CD4-positive, alpha-beta memory T cell (primary cell): ENCODE measurements at regions of chr9 and their contacts with region 1.

Region 1: DNA sequence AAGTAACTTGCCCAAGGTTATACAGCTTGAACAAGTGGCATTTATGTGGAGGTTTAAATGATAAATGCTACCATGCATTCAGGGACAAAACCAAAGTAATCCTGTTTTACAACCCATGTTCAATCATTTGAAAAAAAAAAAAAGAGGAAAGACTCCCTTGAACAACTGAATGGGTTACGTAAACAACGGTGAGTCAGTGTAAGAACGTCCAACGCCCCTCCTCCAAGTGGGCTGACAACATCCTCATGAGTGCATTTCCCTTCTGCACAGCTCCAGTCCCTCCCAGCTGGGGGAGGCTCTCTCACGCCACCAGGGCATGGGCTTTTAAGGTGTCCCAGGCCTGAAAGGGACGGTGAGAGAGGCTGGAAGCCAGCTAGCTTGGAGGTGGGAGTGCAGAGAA is 90.0 kb downstream of the PRRT1B start:
- DNase-seq: peak; percentile 74 to 94 (median 80)
- H3K4me3 ChIP-seq: no peak overlapping the region
- H3K4me3 Mint-ChIP-seq: peak overlapping the region in 5 of 8 donors; percentile 13 to 60 (median 26)
- H3K27ac ChIP-seq: peak overlapping the region; percentile 67
- H3K27ac Mint-ChIP-seq: peak overlapping the region; percentile 92 to 97 (median 96)
- H3K4me1 ChIP-seq: peaks cover 20% of the 10 kb centered on the region
- H3K4me1 Mint-ChIP-seq: peaks cover 23 to 50% (median 38%) of the 10 kb centered on the region in 4 donors
- H3K27me3 ChIP-seq: no peaks in the 10 kb centered on the region
- H3K27me3 Mint-ChIP-seq: no peaks in the 10 kb centered on the region

Region 2: GRCh38 chr9:131366761-131367401 is 268.4 kb before region 1 on chr9:
- CTCF ChIA-PET with region 1: no interaction called
- POLR2A ChIA-PET with region 1: no interaction called
- intact Hi-C with region 1: no loop called
- DNase-seq: no peak
- H3K4me3 ChIP-seq: no peak overlapping the region
- H3K4me3 Mint-ChIP-seq: no peak overlapping the region
- H3K27ac ChIP-seq: no peak overlapping the region
- H3K27ac Mint-ChIP-seq: no peak overlapping the region
- H3K4me1 ChIP-seq: peaks cover 1% of the 10 kb centered on the region
- H3K4me1 Mint-ChIP-seq: peaks cover 2 to 5% (median 3%) of the 10 kb centered on the region in 4 donors
- H3K27me3 ChIP-seq: no peaks in the 10 kb centered on the region
- H3K27me3 Mint-ChIP-seq: no peaks in the 10 kb centered on the region

Region 3: GRCh38 chr9:131590908-131591844 is 44.1 kb before region 1 on chr9:
- CTCF ChIA-PET with region 1: interaction called, 5 read pairs
- POLR2A ChIA-PET with region 1: no interaction called
- intact Hi-C with region 1: loop called (anchors 2 kb)
- DNase-seq: peak; percentile 68 to 74 (median 73)
- H3K4me3 ChIP-seq: no peak overlapping the region
- H3K4me3 Mint-ChIP-seq: peak overlapping the region in 6 of 8 donors; percentile 20 to 73 (median 46)
- H3K27ac ChIP-seq: no peak overlapping the region
- H3K27ac Mint-ChIP-seq: peak overlapping the region; percentile 77 to 94 (median 85)
- H3K4me1 ChIP-seq: peaks cover 25% of the 10 kb centered on the region
- H3K4me1 Mint-ChIP-seq: peaks cover 22 to 48% (median 34%) of the 10 kb centered on the region in 4 donors
- H3K27me3 ChIP-seq: no peaks in the 10 kb centered on the region
- H3K27me3 Mint-ChIP-seq: no peaks in the 10 kb centered on the region

Region 4: GRCh38 chr9:131656356-131657036 is 21.2 kb after region 1 on chr9:
- CTCF ChIA-PET with region 1: interaction called, 3 read pairs
- POLR2A ChIA-PET with region 1: interaction called, 3 read pairs
- intact Hi-C with region 1: loop called (anchors 1 kb)
- DNase-seq: peak; percentile 73 to 93 (median 76)
- H3K4me3 ChIP-seq: peak overlapping the region in 1 of 2 donors; percentile 4
- H3K4me3 Mint-ChIP-seq: peak overlapping the region; percentile 50 to 86 (median 72)
- H3K27ac ChIP-seq: peak overlapping the region; percentile 70
- H3K27ac Mint-ChIP-seq: peak overlapping the region; percentile 92 to 99 (median 97)
- H3K4me1 ChIP-seq: peaks cover 81% of the 10 kb centered on the region
- H3K4me1 Mint-ChIP-seq: peaks cover 53 to 87% (median 73%) of the 10 kb centered on the region in 4 donors
- H3K27me3 ChIP-seq: no peaks in the 10 kb centered on the region
- H3K27me3 Mint-ChIP-seq: no peaks in the 10 kb centered on the region